Psoas muscle (tissue), 8 donors: ENCODE measurements at regions of chr15 and their contacts with region 1.

Region 1: GRCh38 chr15:34914317-34914716 is 55.2 kb downstream of the AQR start:
- DNase-seq: no peak
- ATAC-seq: no peak
- H3K4me3 ChIP-seq: no peak overlapping the region
- H3K27ac ChIP-seq: no peak overlapping the region
- H3K4me1 ChIP-seq: no peaks in the 10 kb centered on the region
- H3K27me3 ChIP-seq: no peaks in the 10 kb centered on the region
- CTCF ChIP-seq: no peak

Region 2: DNA sequence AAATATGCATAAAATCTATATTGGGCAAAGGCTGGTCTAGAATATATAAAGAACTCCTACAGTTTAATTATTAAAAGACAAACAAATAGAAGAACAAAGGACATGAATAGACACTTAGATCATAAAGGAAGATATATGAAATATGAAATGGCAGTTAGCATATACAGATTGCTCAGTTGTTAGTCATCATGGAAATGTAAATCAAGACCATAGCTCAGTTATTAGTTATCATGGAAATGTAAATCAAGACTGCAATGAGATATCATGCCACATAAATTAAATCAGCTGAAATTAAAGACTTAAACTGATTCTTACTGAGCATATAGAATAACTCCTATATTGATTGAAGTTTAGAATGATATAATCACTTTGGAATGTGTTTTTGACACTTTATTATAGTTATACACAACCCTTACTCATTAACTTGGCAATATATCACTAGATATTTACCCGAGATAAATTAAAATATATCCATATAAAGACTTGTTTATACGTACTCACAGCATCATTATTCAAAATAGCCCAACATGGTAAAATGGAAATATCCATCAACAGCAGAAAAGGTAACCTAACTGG is 285.7 kb before region 1 on chr15:
- intact Hi-C with region 1: loop called in 1 of 2 experiments (anchors 5 kb)
- DNase-seq: no peak
- ATAC-seq: no peak
- H3K4me3 ChIP-seq: no peak overlapping the region
- H3K27ac ChIP-seq: no peak overlapping the region
- H3K4me1 ChIP-seq: no peaks in the 10 kb centered on the region
- H3K27me3 ChIP-seq: peaks cover 0 to 2% (median 0%) of the 10 kb centered on the region in 3 donors
- CTCF ChIP-seq: no peak

Region 3: GRCh38 chr15:34650177-34650576 is 264.1 kb before region 1 on chr15:
- intact Hi-C with region 1: no loop called
- DNase-seq: no peak
- ATAC-seq: no peak
- H3K4me3 ChIP-seq: no peak overlapping the region
- H3K27ac ChIP-seq: no peak overlapping the region
- H3K4me1 ChIP-seq: no peaks in the 10 kb centered on the region
- H3K27me3 ChIP-seq: no peaks in the 10 kb centered on the region
- CTCF ChIP-seq: no peak

Region 4: DNA sequence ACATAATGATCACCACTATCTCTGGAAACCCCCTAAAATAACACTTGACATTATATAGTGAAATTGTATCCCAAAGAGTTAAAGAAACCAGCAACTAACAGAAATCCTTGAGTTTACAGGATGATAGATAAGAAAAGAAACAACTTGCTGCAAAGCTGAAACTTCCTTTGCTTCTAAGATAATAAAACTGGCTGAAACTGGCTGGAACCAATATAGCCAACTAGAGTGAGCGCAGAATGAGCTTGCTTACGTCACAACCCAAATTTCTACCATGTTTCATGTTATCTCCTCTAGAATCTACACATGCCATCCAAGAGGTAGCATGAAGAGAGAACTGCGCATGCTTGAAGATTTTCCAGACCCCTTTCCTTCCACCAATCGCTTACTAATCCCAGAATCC is 35.2 kb before region 1 on chr15:
- intact Hi-C with region 1: loop called in 1 of 2 experiments (anchors 5 kb)
- DNase-seq: no peak
- ATAC-seq: no peak
- H3K4me3 ChIP-seq: no peak overlapping the region
- H3K27ac ChIP-seq: no peak overlapping the region
- H3K4me1 ChIP-seq: no peaks in the 10 kb centered on the region
- H3K27me3 ChIP-seq: no peaks in the 10 kb centered on the region
- CTCF ChIP-seq: no peak